A673 (cell line): ENCODE measurements at regions of chr16 and their contacts with region 1.

Region 1: DNA sequence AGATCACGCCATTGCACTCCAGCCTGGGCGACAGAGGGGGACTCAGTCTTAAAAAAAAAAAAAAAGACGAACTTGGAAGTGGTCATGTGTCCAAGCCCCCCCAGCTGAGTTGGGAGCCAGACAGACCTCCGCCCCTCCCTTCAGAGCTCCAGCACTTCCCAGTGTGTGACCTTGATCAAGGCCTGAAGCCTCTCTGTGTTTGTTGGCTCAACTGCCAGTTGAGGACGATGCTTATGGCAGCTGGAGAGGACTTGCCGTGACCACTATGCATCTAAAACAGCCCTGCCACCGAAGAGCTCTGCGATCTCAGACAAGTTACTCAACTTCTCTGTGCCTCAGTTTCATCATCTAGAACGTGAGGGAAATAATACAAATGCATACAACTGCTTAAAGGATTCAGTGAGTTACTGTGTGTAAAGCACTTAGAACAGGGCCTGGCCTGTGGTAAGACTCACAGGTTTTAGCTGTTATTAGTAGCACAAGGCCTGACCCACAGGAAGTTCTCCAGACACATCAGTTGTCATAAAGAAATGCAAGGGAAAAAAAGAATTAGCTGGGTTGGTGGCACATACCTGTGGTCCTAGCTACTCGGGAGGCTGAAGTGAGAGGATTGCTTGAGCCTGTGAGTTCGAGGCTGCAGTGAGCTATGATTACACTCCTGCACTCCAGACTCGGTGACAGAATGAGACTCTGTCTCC is 7.0 kb upstream of the IL27 start:
- DNase-seq: no peak
- H3K4me3 ChIP-seq: no peak overlapping the region
- H3K27ac ChIP-seq: no peak overlapping the region
- H3K4me1 ChIP-seq: no peaks in the 10 kb centered on the region
- H3K27me3 ChIP-seq: no peaks in the 10 kb centered on the region
- CTCF ChIP-seq: no peak

Region 2: DNA sequence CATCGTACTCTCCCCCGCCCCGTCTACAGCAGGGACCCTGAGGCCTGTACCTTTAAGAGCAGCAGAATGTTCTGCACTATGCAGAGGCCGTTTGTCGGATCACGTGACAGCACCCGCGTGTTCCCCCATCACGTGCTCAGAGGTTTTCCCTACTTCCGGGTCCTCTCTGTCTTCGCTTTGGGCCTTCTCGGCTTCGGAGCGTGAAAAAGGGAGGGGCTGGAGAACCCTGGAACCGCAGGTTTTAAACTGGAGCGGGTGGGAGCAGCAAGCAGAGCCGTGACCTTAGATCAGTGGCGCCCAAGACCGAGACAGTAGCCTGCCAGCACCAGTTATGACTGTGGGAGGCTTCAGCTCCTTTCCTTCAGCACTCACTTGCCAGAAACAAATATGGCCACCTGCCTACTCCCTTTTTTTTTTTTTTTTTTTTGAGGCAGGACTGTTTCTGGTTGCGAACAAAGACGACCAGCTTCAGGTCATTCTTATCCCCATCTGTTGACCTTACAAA is 21.6 kb before region 1 on chr16 and contains the start of gene CLN3:
- CTCF ChIA-PET with region 1: no interaction called
- POLR2A ChIA-PET with region 1: interaction called, 15 read pairs
- intact Hi-C with region 1: loop called (anchors 2 kb)
- DNase-seq: peak; percentile 96
- H3K4me3 ChIP-seq: peak within 1 kb of the TSS; percentile 94
- H3K27ac ChIP-seq: peak within 1 kb of the TSS; percentile 98
- H3K4me1 ChIP-seq: no peaks in the 10 kb centered on the region
- H3K27me3 ChIP-seq: no peaks in the 10 kb centered on the region
- CTCF ChIP-seq: no peak
- total RNA-seq, gene CLN3: 31.4 and 37.3 TPM in 2 replicates

Region 3: DNA sequence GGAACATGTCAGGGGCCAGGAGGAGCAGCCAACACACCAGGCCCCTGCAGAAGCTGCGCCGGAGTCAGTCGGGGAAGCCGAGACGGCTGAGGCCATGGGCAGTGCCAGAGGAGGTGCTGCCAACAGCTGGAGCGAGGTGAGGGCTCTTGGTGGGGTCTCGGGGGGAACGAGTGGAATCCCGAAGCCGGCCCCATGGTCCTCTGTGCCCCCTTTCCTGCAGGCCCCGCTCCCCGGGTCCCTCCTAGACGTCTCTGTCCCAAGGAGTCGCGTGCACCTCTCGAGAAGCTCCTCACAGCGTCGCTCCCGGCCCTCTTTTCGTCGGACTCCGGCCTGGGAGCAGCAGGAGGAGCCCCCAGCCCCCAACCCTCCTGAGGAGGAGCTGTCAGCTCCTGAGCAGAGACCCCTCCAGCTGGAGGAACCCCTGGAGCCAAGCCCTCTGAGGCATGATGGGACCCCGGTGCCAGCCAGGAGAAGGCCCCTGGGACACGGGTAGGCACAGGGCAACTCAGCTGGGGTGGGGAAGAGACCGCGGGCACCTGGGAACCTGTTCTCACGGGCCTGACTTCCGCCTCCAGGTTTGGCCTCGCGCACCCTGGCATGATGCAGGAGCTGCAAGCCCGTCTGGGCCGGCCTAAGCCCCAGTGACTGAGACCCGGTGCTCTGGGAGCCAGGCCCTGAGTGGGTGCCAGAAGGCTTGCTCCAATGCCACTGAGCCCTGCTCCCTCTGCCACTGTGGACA is 15.6 kb before region 1 on chr16:
- CTCF ChIA-PET with region 1: no interaction called
- POLR2A ChIA-PET with region 1: interaction called, 4 read pairs
- intact Hi-C with region 1: loop called (anchors 2 kb)
- DNase-seq: no peak
- H3K4me3 ChIP-seq: no peak overlapping the region
- H3K27ac ChIP-seq: no peak overlapping the region
- H3K4me1 ChIP-seq: no peaks in the 10 kb centered on the region
- H3K27me3 ChIP-seq: no peaks in the 10 kb centered on the region
- CTCF ChIP-seq: no peak

Region 4: GRCh38 chr16:28561557-28562187 is 48.0 kb after region 1 on chr16:
- CTCF ChIA-PET with region 1: no interaction called
- POLR2A ChIA-PET with region 1: no interaction called
- intact Hi-C with region 1: no loop called
- DNase-seq: no peak
- H3K4me3 ChIP-seq: no peak overlapping the region
- H3K27ac ChIP-seq: no peak overlapping the region
- H3K4me1 ChIP-seq: no peaks in the 10 kb centered on the region
- H3K27me3 ChIP-seq: no peaks in the 10 kb centered on the region
- CTCF ChIP-seq: no peak